Adrenal gland (tissue), 19 donors: ENCODE measurements at regions of chr1 and their contacts with region 1.

Region 1: DNA sequence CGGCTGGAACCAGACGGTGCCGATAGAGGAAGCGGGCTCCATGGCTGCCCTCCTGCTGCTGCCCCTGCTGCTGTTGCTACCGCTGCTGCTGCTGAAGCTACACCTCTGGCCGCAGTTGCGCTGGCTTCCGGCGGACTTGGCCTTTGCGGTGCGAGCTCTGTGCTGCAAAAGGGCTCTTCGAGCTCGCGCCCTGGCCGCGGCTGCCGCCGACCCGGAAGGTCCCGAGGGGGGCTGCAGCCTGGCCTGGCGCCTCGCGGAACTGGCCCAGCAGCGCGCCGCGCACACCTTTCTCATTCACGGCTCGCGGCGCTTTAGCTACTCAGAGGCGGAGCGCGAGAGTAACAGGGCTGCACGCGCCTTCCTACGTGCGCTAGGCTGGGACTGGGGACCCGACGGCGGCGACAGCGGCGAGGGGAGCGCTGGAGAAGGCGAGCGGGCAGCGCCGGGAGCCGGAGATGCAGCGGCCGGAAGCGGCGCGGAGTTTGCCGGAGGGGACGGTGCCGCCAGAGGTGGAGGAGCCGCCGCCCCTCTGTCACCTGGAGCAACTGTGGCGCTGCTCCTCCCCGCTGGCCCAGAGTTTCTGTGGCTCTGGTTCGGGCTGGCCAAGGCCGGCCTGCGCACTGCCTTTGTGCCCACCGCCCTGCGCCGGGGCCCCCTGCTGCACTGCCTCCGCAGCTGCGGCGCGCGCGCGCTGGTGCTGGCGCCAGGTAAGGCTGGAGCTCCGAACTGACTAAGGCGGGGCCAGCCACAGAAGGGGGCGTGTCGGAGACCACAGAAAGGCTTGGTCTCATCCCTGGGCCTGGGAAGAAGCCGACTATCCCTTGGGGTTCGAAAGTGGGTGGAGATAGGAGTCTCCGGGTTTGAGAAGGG is 486 bp downstream of the SLC27A3 start:
- DNase-seq: peak in 5 of 7 donors; percentile 44 to 79 (median 62)
- H3K4me3 ChIP-seq: peak overlapping the region; percentile 17 to 55 (median 36)
- H3K27ac ChIP-seq: peak overlapping the region in 4 of 5 donors; percentile 16 to 85 (median 60)
- H3K4me1 ChIP-seq: peaks cover 24 to 54% of the 10 kb centered on the region in 2 donors
- H3K27me3 ChIP-seq: no peaks in the 10 kb centered on the region
- CTCF ChIP-seq: no peak
- POLR2A ChIP-seq: peak in 1 of 2 donors; percentile 48

Region 2: GRCh38 chr1:153465811-153466636 is 309.7 kb before region 1 on chr1:
- intact Hi-C with region 1: no loop called
- DNase-seq: peak; percentile 40 to 74 (median 62)
- H3K4me3 ChIP-seq: no peak overlapping the region
- H3K27ac ChIP-seq: no peak overlapping the region
- H3K4me1 ChIP-seq: no peaks in the 10 kb centered on the region
- H3K27me3 ChIP-seq: no peaks in the 10 kb centered on the region
- CTCF ChIP-seq: peak; percentile 65 to 93 (median 80)
- POLR2A ChIP-seq: no peak

Region 3: DNA sequence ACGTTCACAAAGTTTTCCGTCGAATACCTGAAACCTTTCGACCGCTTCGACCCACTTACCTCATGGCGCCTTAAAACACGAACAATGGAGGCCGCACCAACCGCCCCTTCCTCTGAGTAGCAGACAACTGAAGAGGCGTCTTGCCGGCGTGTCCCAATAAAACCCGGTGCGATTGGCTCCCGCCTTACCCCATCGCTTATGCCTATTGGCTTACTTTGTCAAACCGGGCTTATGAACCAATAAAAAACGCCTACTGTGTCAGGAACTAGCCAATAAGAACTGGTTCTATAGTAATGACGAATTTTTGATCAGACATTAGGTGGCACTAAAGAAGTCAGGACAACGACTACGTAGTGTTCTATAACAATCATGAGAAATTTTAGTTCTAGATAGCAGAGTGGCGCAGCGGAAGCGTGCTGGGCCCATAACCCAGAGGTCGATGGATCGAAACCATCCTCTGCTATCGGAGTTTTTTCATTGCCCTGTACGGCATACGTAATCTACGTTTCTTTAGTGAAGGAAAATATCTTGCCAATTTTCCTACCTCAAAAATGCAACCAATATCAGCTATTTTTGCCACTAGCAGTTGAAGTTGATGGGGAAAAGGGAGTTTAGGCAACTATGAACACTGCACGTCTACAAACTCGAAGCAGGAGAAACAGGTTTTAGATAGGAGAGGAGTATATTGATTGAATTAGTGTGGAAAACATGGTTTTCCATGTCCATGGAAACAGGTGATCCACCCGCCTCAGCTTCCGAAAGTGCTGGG is 104.7 kb before region 1 on chr1 and contains the start of gene ILF2:
- intact Hi-C with region 1: loop called in 1 of 2 experiments (anchors 10 kb)
- DNase-seq: peak; percentile 97 to 100 (median 98)
- H3K4me3 ChIP-seq: peak within 1 kb of the TSS in 3 of 4 donors; percentile 58 to 66 (median 66)
- H3K27ac ChIP-seq: peak within 1 kb of the TSS; percentile 82 to 91 (median 88)
- H3K4me1 ChIP-seq: peaks cover 10 to 13% of the 10 kb centered on the region in 2 donors
- H3K27me3 ChIP-seq: no peaks in the 10 kb centered on the region
- CTCF ChIP-seq: peak in 1 of 6 experiments; percentile 4
- POLR2A ChIP-seq: peak; percentile 66 to 95
- total RNA-seq, gene ILF2: 77.7 to 249 (median 107) TPM